Activated T-helper 2 cell treated with anti-CD3 and anti-CD28 coated beads, Interferon-gamma antibody, Interleukin-2, Interleukin-4, amounts not matched to agents 10 μg/mL and 5 μg/mL and 100 μg/mL, durations not matched to agents 14 hours and 24 hours and 36 hours (primary cell): ENCODE measurements at regions of chr12 and their contacts with region 1.

Region 1: DNA sequence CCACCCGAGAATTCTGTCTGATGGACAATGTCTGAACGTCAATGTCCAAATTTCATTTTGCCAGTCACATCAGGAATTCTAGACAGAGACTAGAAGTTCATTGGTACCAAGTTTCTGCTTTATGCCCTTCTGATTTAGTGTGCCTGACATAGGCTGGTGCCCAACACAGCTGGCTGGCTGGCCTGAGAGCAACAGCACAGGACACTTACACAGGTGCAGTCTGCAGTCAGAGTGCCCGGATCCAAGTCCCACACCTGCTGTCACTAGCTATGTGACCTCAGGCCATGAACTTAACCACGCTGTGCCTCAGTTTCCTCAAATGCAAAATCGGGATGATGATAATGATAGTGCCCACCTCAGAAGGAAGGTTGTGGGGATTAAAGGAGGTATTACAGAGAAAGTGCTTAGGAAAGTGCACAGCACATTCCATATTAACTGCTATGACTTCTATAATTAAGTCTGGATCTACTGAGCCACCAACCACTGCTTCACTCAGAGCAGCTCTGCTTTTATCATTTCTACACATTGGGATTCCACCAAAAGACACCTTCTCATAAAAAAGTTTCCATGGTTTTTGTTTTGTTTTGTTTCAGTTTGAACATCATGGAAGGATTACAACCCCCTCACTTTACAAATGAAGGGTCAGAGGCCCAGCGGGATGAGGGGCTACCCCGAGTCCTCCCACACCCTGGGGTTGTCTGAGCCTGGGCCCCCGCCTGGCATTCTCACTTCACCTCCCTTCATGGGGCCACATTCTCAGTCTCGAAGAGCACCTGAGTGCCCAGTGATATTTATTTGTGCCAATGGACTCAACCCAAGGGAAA is 168.8 kb upstream of the BCL2L14 start:
- DNase-seq: no peak
- H3K4me3 Mint-ChIP-seq: no peak overlapping the region
- H3K27ac Mint-ChIP-seq: peak overlapping the region; percentile 85
- H3K4me1 Mint-ChIP-seq: peaks cover 59% of the 10 kb centered on the region
- H3K27me3 Mint-ChIP-seq: no peaks in the 10 kb centered on the region

Region 2: GRCh38 chr12:11771356-11771755 is 130.6 kb before region 1 on chr12:
- intact Hi-C with region 1: loop called (anchors 1 kb)
- DNase-seq: no peak
- H3K4me3 Mint-ChIP-seq: no peak overlapping the region
- H3K27ac Mint-ChIP-seq: peak overlapping the region; percentile 91
- H3K4me1 Mint-ChIP-seq: peaks cover 75% of the 10 kb centered on the region
- H3K27me3 Mint-ChIP-seq: no peaks in the 10 kb centered on the region

Region 3: DNA sequence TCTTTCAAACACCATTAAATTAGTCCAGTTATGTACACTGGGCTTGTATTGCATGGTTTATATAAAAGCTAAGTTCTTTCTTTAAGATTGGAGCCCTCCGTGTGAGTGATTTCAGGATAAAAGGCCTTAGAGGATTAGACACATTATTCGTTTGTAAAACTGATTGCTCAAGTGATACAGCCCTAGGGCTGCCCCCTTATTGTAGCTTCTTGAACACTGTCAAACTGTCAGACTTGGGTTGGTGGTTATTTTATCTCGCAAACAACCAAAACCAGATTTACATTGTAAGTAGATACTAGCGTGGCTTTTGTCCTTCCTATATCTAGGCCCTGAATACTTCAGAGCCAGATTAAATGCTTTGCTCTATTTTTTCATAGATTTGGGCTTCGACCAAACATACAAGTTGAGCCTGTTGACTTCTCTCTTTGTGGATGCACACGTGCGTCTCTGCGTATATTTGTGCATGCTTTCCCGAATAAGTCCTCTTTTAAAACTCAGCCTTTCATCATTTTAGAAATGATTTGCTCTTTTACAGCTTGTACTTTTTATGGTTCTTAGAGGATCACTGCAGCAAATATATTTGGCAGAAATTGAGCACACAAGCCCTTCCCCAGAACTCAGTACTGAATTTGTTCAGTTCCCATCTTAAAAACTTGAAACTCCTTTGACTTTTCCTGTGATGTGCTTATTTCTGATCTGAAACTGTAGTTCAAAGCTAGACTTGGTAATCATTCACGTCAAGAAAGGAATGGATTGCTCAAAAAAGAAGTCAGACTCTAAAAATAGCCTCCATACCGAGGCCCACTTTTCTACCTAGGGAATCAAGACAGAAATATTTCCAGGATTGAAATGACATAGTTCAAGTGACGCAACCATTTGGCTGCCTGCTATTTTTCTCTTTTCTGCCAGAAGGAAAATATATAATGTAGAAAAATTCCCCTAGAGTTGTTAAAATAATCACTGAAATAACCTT is 122.9 kb before region 1 on chr12:
- intact Hi-C with region 1: loop called (anchors 2 kb)
- DNase-seq: no peak
- H3K4me3 Mint-ChIP-seq: no peak overlapping the region
- H3K27ac Mint-ChIP-seq: peak overlapping the region; percentile 75
- H3K4me1 Mint-ChIP-seq: peaks cover 61% of the 10 kb centered on the region
- H3K27me3 Mint-ChIP-seq: no peaks in the 10 kb centered on the region

Region 4: DNA sequence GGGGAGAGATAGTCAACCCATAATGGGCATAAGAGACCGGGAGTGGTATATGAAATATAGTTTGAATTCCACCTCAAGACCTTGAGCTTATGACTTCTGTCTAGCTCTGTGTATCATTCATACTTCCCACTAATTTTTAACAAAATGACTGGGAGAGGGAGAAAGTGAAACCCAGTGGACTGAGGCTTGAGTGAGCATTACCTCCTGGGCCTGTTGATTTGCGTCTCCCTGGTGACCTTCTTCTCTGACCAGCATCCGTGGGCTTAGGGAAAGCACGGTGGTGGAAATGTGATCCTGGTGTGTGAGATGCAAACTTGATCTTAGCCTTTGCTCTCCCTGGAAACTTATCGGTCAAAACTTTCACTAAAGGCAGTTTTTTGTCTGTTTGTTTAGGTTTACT is 39.1 kb before region 1 on chr12:
- intact Hi-C with region 1: loop called (anchors 5 kb)
- DNase-seq: no peak
- H3K4me3 Mint-ChIP-seq: no peak overlapping the region
- H3K27ac Mint-ChIP-seq: peak overlapping the region; percentile 65
- H3K4me1 Mint-ChIP-seq: peaks cover 28% of the 10 kb centered on the region
- H3K27me3 Mint-ChIP-seq: no peaks in the 10 kb centered on the region

Region 5: DNA sequence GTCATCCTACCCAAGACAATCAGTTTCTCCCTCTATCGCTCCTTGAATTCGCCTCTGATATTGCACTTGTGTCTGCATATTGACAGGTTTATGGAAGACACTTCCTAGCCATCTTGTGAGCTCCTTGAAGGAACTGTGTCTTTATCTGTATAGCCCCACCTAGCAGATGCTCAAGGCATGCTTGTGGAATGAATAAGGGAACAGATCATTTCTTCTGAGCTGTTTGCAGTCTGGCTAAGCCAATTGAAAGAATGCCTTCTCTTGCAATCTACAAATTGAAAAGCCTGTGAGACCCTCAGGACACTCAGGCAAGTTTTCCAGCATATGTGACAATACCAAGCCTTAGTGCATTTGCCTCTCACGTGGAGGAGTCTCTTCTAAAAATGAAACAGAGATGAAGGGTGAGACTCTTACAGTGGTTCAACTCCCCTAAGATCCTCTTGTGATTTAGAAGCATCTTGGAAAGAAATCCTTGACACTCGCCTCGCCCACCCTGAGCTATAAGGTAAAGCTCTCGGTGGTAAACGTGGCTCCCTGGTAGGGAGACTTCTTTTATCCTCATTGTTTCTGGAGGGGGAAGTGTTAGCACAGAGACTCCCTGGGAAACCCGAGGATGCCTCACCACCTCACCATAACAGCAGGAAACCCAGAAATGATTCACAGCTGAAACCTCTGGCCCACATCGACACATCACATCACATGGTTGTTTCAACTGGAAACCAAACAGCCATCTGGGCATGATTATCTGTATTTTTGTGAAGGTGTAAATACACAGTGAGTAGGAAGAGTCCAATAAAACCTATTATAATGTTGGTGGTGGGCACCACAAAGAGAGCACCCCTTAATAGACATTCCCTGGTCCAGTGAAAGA is 56.5 kb after region 1 on chr12:
- intact Hi-C with region 1: loop called (anchors 1 kb)
- DNase-seq: peak; percentile 43
- H3K4me3 Mint-ChIP-seq: peak overlapping the region; percentile 13
- H3K27ac Mint-ChIP-seq: peak overlapping the region; percentile 93
- H3K4me1 Mint-ChIP-seq: peaks cover 51% of the 10 kb centered on the region
- H3K27me3 Mint-ChIP-seq: peaks cover 10% of the 10 kb centered on the region

Region 6: DNA sequence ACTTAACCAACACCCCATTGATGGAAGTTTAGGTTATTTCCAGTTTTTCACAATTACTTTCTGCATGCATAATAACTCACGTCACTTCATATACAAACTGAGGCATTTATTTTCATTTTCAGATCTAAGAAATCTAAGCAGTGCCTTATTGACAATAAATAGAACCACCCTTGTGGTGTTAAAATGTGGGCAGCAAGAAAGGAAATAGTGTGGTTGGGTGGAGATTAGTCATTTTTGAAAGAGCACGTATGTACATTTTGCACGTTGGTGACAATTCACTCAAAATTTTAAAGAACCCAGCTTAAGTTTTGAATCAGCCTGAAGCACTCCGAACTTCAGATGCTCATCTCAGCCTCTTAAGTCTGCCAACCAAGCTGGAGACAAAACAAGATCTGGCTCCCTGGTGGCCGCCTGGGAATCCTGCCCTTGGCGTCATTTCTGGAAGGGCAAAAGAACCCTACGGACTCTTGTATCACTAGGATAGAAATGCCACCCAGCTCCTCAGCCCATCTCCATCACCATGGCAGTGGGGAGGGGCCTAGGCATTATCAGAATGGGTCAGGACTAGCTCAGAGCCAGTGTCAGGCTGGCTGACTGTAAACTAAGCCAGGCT is 79.3 kb after region 1 on chr12:
- intact Hi-C with region 1: loop called (anchors 1 kb)
- DNase-seq: peak; percentile 60
- H3K4me3 Mint-ChIP-seq: peak overlapping the region; percentile 33
- H3K27ac Mint-ChIP-seq: peak overlapping the region; percentile 98
- H3K4me1 Mint-ChIP-seq: peaks cover 63% of the 10 kb centered on the region
- H3K27me3 Mint-ChIP-seq: no peaks in the 10 kb centered on the region

Region 7: GRCh38 chr12:12432364-12432763 is 530.5 kb after region 1 on chr12:
- intact Hi-C with region 1: no loop called
- DNase-seq: no peak
- H3K4me3 Mint-ChIP-seq: no peak overlapping the region
- H3K27ac Mint-ChIP-seq: peak overlapping the region; percentile 42
- H3K4me1 Mint-ChIP-seq: peaks cover 73% of the 10 kb centered on the region
- H3K27me3 Mint-ChIP-seq: no peaks in the 10 kb centered on the region